CD8-positive, alpha-beta T cell (primary cell): ENCODE measurements at regions of chr7 and their contacts with region 1.

Region 1: GRCh38 chr7:157386979-157387800 is 50.4 kb downstream of the DNAJB6 start:
- DNase-seq: peak; percentile 76 to 93 (median 89)
- ATAC-seq: peak; percentile 94
- H3K4me3 ChIP-seq: no peak overlapping the region
- H3K4me3 Mint-ChIP-seq: peak overlapping the region; percentile 1
- H3K27ac ChIP-seq: peak overlapping the region in 1 of 2 experiments; percentile 45
- H3K27ac Mint-ChIP-seq: peak overlapping the region; percentile 58
- H3K4me1 ChIP-seq: peaks cover 26% of the 10 kb centered on the region
- H3K4me1 Mint-ChIP-seq: peaks cover 41% of the 10 kb centered on the region
- H3K27me3 ChIP-seq: no peaks in the 10 kb centered on the region
- H3K27me3 Mint-ChIP-seq: no peaks in the 10 kb centered on the region
- CTCF ChIP-seq: peak; percentile 93

Region 2: DNA sequence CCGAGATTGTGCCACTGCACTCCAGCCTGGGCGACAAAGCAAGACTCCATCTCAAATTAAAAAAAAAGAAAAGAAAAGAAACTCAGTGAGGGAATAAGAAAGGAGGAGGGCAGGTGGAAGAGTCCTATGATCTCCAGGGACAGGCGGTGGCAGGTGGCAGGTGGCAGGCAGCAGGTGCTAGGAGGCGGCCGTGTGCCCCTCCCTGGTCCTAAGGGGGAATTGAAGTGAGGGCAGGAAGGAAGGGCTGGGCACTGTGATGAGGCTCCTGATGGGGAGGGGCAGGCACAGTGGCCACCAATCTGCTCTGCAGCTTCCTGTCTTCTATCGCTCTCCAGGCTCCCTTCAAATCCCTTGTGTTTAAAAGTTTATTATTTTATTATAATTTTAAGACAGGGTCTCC is 289.6 kb before region 1 on chr7:
- CTCF ChIA-PET with region 1: no interaction called
- POLR2A ChIA-PET with region 1: no interaction called
- intact Hi-C with region 1: no loop called
- DNase-seq: no peak
- ATAC-seq: no peak
- H3K4me3 ChIP-seq: no peak overlapping the region
- H3K4me3 Mint-ChIP-seq: no peak overlapping the region
- H3K27ac ChIP-seq: no peak overlapping the region
- H3K27ac Mint-ChIP-seq: no peak overlapping the region
- H3K4me1 ChIP-seq: no peaks in the 10 kb centered on the region
- H3K4me1 Mint-ChIP-seq: no peaks in the 10 kb centered on the region
- H3K27me3 ChIP-seq: no peaks in the 10 kb centered on the region
- H3K27me3 Mint-ChIP-seq: peaks cover 2% of the 10 kb centered on the region
- CTCF ChIP-seq: no peak

Region 3: DNA sequence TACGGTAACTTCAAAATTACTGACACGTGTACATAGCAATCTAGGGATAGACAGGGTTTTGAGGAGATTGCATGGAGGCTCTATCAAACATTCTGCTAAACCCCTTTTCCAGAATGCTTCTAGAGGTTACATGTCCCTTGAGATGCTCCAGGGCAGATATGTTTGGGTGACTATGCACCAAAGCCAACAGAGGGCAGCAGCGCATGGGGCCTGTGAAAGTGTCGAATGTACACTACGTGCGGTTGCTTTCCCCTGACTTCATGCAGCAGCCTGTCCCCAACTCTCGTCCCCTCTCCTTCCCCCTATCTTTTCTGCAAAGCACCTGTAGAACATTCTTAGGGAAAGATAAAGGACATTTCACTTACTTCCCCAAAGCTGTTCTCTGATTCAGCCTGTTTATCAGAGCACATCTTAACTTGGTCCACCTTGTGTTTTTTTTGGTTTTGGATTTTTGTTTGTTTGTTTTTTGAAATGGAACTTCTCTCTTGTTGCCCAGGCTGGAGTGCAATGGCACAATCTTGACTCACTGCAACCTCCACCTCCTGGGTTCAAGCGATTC is 158.2 kb before region 1 on chr7:
- CTCF ChIA-PET with region 1: no interaction called
- POLR2A ChIA-PET with region 1: no interaction called
- intact Hi-C with region 1: loop called in 1 of 2 experiments (anchors 5 kb)
- DNase-seq: peak in 8 of 9 experiments; percentile 2 to 52 (median 26)
- ATAC-seq: no peak
- H3K4me3 ChIP-seq: no peak overlapping the region
- H3K4me3 Mint-ChIP-seq: no peak overlapping the region
- H3K27ac ChIP-seq: no peak overlapping the region
- H3K27ac Mint-ChIP-seq: no peak overlapping the region
- H3K4me1 ChIP-seq: no peaks in the 10 kb centered on the region
- H3K4me1 Mint-ChIP-seq: no peaks in the 10 kb centered on the region
- H3K27me3 ChIP-seq: no peaks in the 10 kb centered on the region
- H3K27me3 Mint-ChIP-seq: no peaks in the 10 kb centered on the region
- CTCF ChIP-seq: peak; percentile 16

Region 4: DNA sequence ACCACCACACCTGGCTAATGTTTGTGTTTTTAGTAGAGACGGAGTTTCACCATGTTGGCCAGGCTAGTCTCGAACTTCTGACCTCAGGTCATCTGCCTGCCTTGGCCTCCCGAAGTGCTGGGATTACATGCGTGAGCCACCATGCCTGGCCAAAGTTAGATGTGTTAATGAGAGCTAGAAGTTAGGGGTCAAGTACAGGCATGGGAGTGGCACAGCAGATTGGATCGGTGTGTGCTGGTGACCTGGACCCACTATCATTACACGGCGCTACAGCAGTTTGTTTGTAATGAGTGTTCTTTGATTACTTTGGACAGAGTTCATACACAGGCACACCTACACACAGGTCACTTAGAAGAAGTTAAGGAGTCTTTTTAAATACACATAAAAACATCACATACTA is 13.7 kb before region 1 on chr7:
- CTCF ChIA-PET with region 1: interaction called, 11 read pairs
- POLR2A ChIA-PET with region 1: no interaction called
- intact Hi-C with region 1: no loop called
- DNase-seq: no peak
- ATAC-seq: no peak
- H3K4me3 ChIP-seq: no peak overlapping the region
- H3K4me3 Mint-ChIP-seq: no peak overlapping the region
- H3K27ac ChIP-seq: no peak overlapping the region
- H3K27ac Mint-ChIP-seq: peak overlapping the region; percentile 10
- H3K4me1 ChIP-seq: peaks cover 28% of the 10 kb centered on the region
- H3K4me1 Mint-ChIP-seq: peaks cover 60% of the 10 kb centered on the region
- H3K27me3 ChIP-seq: no peaks in the 10 kb centered on the region
- H3K27me3 Mint-ChIP-seq: no peaks in the 10 kb centered on the region
- CTCF ChIP-seq: no peak

Region 5: GRCh38 chr7:157875230-157876179 is 488.3 kb after region 1 on chr7:
- CTCF ChIA-PET with region 1: interaction called, 4 read pairs
- POLR2A ChIA-PET with region 1: no interaction called
- intact Hi-C with region 1: loop called in 1 of 2 experiments (anchors 2 kb)
- DNase-seq: peak in 8 of 9 experiments; percentile 29 to 72 (median 55)
- ATAC-seq: peak; percentile 78
- H3K4me3 ChIP-seq: peak overlapping the region; percentile 15 to 16
- H3K4me3 Mint-ChIP-seq: peak overlapping the region; percentile 84
- H3K27ac ChIP-seq: no peak overlapping the region
- H3K27ac Mint-ChIP-seq: peak overlapping the region; percentile 53
- H3K4me1 ChIP-seq: peaks cover 38% of the 10 kb centered on the region
- H3K4me1 Mint-ChIP-seq: peaks cover 35% of the 10 kb centered on the region
- H3K27me3 ChIP-seq: no peaks in the 10 kb centered on the region
- H3K27me3 Mint-ChIP-seq: no peaks in the 10 kb centered on the region
- CTCF ChIP-seq: peak; percentile 69